Cardiac septum (tissue), 1 donor: ENCODE measurements at regions of chr2 and their contacts with region 1.

Region 1: GRCh38 chr2:188291617-188292347 is at the start of gene GULP1:
- DNase-seq: peak; percentile 79
- total RNA-seq, gene GULP1: 5.1 TPM

Region 2: DNA sequence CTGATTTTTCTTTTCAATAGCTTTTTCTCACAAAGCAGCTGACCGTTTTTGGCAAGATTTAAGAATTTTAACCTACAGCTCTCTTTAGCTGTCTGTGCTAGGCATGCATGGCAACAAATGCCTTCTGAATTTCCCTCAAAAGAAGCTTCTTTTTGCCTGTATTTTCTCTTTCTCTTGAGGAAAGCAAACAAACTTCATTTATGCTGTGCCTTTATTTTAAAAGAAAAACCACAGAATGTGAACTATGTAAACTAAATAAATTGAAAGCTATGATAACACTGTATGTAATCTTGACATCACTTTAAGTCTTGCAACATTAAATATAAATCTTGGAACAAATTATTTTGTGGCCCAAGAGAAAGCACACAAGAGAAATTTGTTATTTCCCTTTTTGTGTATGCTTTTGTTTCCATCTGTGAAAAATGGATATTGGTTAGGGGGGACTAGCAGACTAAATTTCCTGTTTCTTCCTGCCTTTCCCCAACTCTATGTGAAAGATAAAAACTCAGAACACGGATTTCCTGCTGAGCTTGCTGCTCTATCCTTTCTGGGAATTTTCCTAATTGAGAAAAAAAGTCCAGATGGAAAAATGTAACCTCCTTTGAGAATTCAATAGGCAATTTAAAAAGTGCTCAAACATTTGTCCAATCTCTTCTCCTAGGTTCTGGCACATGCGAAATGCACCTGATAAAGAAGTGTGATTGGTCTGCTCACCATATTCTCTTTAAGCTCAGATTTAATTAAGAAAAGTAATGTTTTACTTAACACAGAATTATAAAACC is 716.6 kb before region 1 on chr2:
- intact Hi-C with region 1: loop called (anchors 5 kb)
- DNase-seq: no peak

Region 3: DNA sequence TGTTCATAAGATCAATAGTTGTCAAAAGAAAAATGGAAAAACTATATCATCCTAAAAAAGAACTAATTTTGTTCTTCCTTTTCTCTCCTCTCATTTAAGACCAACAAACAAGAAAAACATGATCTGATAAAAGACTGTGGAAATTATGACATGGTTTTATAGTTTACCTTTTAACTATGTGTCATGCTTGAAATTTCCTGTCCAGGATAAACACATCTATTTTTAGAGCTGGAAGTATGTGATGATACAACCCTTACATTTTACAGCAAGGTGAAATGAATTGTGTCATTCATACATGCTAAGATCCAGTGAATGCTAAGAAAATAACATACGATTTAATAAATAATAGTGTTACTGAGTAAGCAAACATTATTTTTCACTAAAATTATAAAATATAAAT is 89.8 kb after region 1 on chr2:
- intact Hi-C with region 1: loop called (anchors 5 kb)
- DNase-seq: no peak

Region 4: GRCh38 chr2:188512456-188512855 is 220.7 kb after region 1 on chr2:
- intact Hi-C with region 1: loop called (anchors 10 kb)
- DNase-seq: no peak